IMR-90 (cell line): ENCODE measurements at regions of chr15 and their contacts with region 1.

Region 1: DNA sequence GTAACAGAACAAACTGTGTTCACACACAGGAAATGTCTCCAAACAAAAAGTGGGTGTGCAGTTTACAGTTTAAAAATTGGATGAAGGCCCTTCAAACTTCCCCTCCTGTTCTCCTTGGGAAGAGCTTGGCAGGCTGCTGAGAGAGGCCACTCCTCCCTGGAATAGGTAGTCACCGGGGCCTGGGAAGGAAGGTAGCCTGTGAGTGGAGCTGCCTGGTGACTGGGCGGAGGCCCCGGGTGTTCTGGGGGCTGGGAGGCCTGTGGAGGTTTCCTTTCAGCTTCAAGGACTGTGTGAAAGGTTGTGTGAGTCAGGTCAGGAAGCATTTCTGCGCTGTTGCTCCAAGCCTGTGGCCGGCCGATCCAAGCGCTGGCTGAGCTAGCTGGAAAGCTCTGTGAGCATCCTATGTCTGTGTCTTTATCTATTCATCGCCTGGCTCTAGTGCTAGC is 14.1 kb downstream of the SLCO3A1 start:
- DNase-seq: peak; percentile 87
- ATAC-seq: peak; percentile 89
- H3K4me3 ChIP-seq: no peak overlapping the region
- H3K27ac ChIP-seq: peak overlapping the region; percentile 65
- H3K4me1 ChIP-seq: peaks cover 17% of the 10 kb centered on the region
- H3K27me3 ChIP-seq: no peaks in the 10 kb centered on the region
- CTCF ChIP-seq: no peak
- POLR2A ChIP-seq: no peak
- RAD21 ChIP-seq: peak; percentile 23; the same call in 1 of the 2 replicates

Region 2: GRCh38 chr15:91926908-91927270 is 59.3 kb after region 1 on chr15:
- CTCF ChIA-PET with region 1: no interaction called
- POLR2A ChIA-PET with region 1: no interaction called
- dilution Hi-C with region 1: no loop called
- in situ Hi-C with region 1: no loop called
- intact Hi-C with region 1: loop called (anchors 5 kb)
- DNase-seq: no peak
- ATAC-seq: peak; percentile 37
- H3K4me3 ChIP-seq: no peak overlapping the region
- H3K27ac ChIP-seq: no peak overlapping the region
- H3K4me1 ChIP-seq: no peaks in the 10 kb centered on the region; the same call in 1 of the 2 replicates
- H3K27me3 ChIP-seq: no peaks in the 10 kb centered on the region
- CTCF ChIP-seq: no peak
- POLR2A ChIP-seq: no peak
- RAD21 ChIP-seq: no peak

Region 3: GRCh38 chr15:91970142-91970541 is 102.5 kb after region 1 on chr15:
- CTCF ChIA-PET with region 1: no interaction called
- POLR2A ChIA-PET with region 1: no interaction called
- dilution Hi-C with region 1: no loop called
- in situ Hi-C with region 1: no loop called
- intact Hi-C with region 1: loop called (anchors 5 kb)
- DNase-seq: peak; percentile 60
- ATAC-seq: peak; percentile 80
- H3K4me3 ChIP-seq: no peak overlapping the region
- H3K27ac ChIP-seq: no peak overlapping the region
- H3K4me1 ChIP-seq: peaks cover 6% of the 10 kb centered on the region; the same call in 1 of the 2 replicates
- H3K27me3 ChIP-seq: no peaks in the 10 kb centered on the region
- CTCF ChIP-seq: no peak
- POLR2A ChIP-seq: no peak
- RAD21 ChIP-seq: no peak

Region 4: GRCh38 chr15:92005154-92005553 is 137.6 kb after region 1 on chr15:
- CTCF ChIA-PET with region 1: no interaction called
- POLR2A ChIA-PET with region 1: no interaction called
- dilution Hi-C with region 1: no loop called
- in situ Hi-C with region 1: no loop called
- intact Hi-C with region 1: no loop called
- DNase-seq: no peak
- ATAC-seq: no peak
- H3K4me3 ChIP-seq: no peak overlapping the region
- H3K27ac ChIP-seq: no peak overlapping the region
- H3K4me1 ChIP-seq: no peaks in the 10 kb centered on the region
- H3K27me3 ChIP-seq: no peaks in the 10 kb centered on the region
- CTCF ChIP-seq: no peak
- POLR2A ChIP-seq: no peak
- RAD21 ChIP-seq: no peak